CD8-positive, alpha-beta memory T cell (primary cell): ENCODE measurements at regions of chr2 and their contacts with region 1.

Region 1: GRCh38 chr2:232521959-232522622 is 1.9 kb downstream of the PRSS56 start:
- DNase-seq: peak; percentile 54 to 67 (median 62)
- H3K4me3 ChIP-seq: no peak overlapping the region
- H3K4me3 Mint-ChIP-seq: peak overlapping the region in 2 of 7 donors; percentile 68 to 78
- H3K27ac ChIP-seq: no peak overlapping the region
- H3K27ac Mint-ChIP-seq: no peak overlapping the region
- H3K4me1 ChIP-seq: peaks cover 10% of the 10 kb centered on the region
- H3K4me1 Mint-ChIP-seq: peaks cover 8 to 16% (median 8%) of the 10 kb centered on the region in 3 donors
- H3K27me3 ChIP-seq: peaks cover 22% of the 10 kb centered on the region
- H3K27me3 Mint-ChIP-seq: peaks cover 28 to 42% of the 10 kb centered on the region in 2 donors

Region 2: GRCh38 chr2:232444409-232445148 is 77.5 kb before region 1 on chr2:
- CTCF ChIA-PET with region 1: no interaction called
- POLR2A ChIA-PET with region 1: no interaction called
- DNase-seq: peak; percentile 17 to 62 (median 29)
- H3K4me3 ChIP-seq: no peak overlapping the region
- H3K4me3 Mint-ChIP-seq: no peak overlapping the region
- H3K27ac ChIP-seq: no peak overlapping the region
- H3K27ac Mint-ChIP-seq: no peak overlapping the region
- H3K4me1 ChIP-seq: no peaks in the 10 kb centered on the region
- H3K4me1 Mint-ChIP-seq: peaks cover 0 to 8% (median 4%) of the 10 kb centered on the region in 3 donors
- H3K27me3 ChIP-seq: no peaks in the 10 kb centered on the region
- H3K27me3 Mint-ChIP-seq: peaks cover 0 to 8% of the 10 kb centered on the region in 2 donors

Region 3: GRCh38 chr2:232511336-232511888 is 10.7 kb before region 1 on chr2:
- CTCF ChIA-PET with region 1: interaction called, 15 read pairs
- POLR2A ChIA-PET with region 1: no interaction called
- DNase-seq: no peak
- H3K4me3 ChIP-seq: no peak overlapping the region
- H3K4me3 Mint-ChIP-seq: no peak overlapping the region
- H3K27ac ChIP-seq: no peak overlapping the region
- H3K27ac Mint-ChIP-seq: no peak overlapping the region
- H3K4me1 ChIP-seq: no peaks in the 10 kb centered on the region
- H3K4me1 Mint-ChIP-seq: no peaks in the 10 kb centered on the region
- H3K27me3 ChIP-seq: no peaks in the 10 kb centered on the region
- H3K27me3 Mint-ChIP-seq: peaks cover 2 to 34% of the 10 kb centered on the region in 2 donors